Left ventricle myocardium superior (tissue), 1 donor: ENCODE measurements at regions of chr17 and their contacts with region 1.

Region 1: GRCh38 chr17:16521070-16521727 is 29.2 kb upstream of the LRRC75A start:
- DNase-seq: peak; percentile 44
- ATAC-seq: peak; percentile 93

Region 2: DNA sequence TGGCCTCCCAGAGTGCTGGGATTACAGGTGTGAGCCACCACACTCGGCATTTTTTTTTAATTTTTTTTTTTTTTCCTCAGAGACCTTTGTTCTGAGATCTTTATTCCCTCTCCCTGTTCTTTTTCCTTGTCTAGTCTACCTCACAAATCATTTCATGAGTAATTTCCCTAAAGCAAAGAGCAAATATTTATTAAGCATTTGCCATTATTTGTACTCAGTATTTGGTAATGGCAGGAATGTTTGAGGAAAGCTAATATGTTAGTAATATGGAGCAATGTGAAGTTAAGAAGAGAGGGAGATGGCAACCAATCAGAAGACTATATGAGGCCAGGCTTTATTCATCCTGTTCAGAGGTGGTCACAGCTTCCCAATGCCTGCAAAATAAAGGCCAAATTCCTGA is 181.3 kb before region 1 on chr17:
- intact Hi-C with region 1: no loop called
- DNase-seq: no peak
- ATAC-seq: no peak

Region 3: DNA sequence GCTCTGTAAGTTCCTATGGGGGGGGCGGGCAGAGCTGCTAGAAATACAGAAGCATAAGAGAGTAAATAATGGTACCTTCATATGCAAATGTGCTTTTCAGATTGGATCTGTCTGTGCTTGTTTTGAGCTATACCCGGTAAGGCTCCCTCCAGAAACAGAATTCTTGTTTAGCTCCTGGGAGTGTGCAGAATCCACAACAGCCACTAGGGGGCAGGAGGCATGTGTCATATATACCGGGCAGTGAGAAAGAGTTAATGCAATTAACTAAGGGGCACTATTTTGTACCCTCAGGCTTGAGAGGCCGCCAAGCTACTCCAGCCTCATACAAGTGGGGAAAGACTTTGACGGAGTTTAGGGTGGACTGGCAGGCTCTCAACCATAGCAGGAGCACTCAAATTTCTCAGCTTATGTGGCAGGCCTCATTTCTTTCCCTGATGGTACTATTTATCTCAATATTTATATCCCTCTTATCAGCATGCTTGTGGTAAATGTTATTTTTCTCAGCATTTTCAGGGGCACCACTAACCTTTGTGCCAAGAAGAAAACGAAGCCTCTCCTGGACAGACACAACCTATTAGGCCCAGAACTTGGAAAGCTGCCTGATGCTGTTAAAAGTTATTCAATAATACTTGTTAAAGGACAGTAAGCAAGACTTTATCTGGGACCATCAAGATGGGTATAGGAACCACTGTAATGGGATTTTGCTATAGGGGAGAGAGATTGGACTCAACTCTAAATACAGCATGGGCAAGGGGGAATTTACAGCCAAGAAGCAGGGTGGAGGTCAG is 157.3 kb before region 1 on chr17:
- intact Hi-C with region 1: loop called (anchors 10 kb)
- DNase-seq: peak; percentile 77
- ATAC-seq: peak; percentile 89

Region 4: DNA sequence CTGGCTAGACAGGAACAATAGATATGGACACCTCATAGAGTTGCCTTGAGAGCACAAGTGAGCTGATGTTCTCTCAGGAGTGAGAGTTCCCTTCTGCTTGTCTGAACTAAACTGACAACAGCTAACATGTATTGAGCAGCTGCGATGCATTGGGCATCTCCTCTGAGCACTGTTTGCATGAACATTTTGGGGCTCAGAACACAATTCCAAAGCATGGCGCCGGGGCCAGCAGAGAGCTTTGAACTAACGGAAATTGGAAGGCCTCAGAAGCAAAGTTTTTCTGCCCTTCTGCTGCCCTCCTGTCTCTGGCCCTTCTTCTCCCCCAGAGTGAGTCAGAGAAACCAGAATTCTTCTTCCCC is 67.7 kb before region 1 on chr17:
- intact Hi-C with region 1: loop called (anchors 5 kb)
- DNase-seq: no peak
- ATAC-seq: no peak